ENCODE measurements at regions of chr5 and their contacts with region 1.

Region 1: DNA sequence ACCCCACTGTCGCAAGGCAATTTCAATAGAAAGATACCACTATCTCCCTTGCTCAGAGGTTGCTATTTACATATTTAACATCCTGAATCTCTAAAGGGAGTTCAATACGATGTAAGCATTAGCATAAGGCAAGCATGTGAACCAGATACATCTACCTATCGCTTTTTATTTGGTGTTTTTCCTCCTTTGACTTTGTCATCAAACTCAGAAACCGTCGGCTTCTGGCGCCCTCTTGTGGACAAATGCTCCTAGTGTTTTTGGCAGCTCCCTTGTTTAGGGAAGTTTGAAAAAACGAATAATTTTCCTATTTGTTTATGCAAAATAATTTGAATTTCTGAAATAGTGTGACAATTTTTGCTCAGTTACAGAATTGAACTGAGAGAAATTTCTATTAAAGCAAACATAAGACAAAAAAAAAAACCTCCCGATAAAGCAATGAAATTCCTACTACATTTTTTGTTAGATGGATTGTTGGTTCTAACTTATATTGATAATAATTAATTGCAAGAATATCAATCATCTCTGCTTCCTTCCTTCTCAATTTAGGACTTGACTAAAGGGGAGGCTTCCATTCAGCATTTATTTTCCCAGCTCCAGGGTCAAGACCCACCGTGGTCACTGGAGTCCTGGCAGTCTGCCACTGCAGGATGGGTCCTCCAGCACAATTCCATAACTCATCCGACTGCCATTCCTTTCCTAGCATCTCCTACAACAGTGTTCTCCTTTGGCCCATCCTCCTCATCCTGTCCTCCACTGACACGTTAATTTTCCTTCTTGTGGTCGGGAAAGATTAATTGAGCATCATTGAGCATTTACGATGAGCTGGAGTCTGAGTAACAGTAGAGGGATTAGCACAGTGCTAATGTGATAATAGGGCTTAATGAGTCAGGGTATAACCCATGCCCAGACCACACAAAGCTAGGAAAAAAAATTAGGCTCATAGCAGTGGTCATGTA is 131.8 kb upstream of the CHD1 start:
- DNase-seq: peak; percentile 83
- H3K4me3 Mint-ChIP-seq: no peak overlapping the region
- H3K27ac Mint-ChIP-seq: no peak overlapping the region
- H3K4me1 Mint-ChIP-seq: peaks cover 20% of the 10 kb centered on the region
- H3K27me3 Mint-ChIP-seq: no peaks in the 10 kb centered on the region
- CTCF ChIP-seq: peak; percentile 83

Region 2: DNA sequence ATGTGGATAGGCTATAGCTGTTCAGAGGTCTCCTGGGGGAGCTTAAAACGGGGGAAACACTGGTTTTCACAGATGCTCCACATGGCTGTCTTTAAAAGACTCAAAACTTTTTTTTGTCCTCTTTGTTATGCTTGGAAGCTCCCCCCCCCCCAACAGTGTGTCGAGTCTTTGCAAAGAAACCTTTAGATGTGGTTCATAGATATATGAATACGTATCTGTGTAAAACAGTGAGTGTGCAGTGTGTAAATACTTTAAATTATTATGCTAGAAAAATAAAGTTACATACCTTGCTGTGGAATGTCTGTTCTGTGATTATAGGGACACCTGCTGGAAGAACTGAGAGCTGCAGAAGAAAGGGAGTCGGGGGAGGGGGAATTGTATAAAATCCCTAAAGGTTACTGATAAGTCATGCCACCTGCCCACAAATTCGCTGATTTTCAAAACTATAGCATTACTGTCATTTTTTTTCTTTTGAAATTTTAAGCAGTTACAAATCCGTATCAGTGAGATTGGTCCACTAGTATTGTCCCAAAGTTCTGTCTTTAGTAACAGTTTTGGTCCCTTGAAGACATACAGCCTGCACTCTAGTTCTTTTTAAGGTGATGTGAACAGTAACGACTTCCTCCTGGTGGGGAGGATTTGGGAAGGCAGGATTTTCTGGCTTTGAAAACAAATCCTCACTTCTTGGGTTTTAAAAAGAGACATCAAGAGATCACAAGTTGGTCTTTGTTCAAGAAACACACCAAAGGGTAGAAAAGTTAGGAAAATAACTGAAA is 264.2 kb before region 1 on chr5:
- CTCF ChIA-PET with region 1: no interaction called
- POLR2A ChIA-PET with region 1: no interaction called
- intact Hi-C with region 1: loop called (anchors 10 kb)
- DNase-seq: peak; percentile 74
- H3K4me3 Mint-ChIP-seq: no peak overlapping the region
- H3K27ac Mint-ChIP-seq: no peak overlapping the region
- H3K4me1 Mint-ChIP-seq: no peaks in the 10 kb centered on the region
- H3K27me3 Mint-ChIP-seq: no peaks in the 10 kb centered on the region
- CTCF ChIP-seq: peak; percentile 73

Region 3: DNA sequence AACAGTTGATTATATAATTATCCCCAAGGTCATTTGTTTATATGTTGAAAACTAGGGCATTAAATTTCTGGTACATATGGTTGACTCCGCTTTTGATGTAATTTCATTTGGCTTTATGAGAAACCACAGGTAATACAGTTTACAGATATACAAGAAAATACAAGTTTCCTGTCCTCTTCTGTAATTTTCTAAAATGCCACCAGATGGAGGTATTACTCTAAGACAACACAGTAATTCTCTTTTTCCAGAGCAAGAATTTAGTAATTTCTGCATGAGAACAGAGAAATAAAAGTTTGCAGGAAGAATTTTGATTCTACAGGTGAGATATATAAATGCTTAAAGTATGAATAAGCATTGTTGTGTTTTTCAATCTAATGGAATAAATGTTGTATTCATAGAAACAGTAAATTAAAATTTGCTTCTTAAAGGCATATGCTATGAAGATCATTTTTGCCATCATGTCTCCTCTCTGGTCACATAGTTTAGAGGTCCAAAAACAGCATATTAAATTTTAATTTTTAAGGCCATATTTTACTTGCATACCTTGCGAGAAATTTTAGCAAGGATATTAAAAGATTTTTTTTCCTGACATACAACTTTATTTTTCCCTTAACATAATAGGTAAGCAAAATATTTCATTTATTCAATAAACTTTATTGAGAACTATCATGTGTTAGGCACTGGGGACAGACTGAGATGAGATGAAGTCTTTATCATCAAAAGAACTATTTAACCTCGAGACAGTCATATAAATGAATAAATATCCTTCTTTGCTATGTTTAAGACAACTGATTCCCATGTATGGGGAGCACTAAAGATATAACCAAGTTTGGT is 154.5 kb before region 1 on chr5:
- CTCF ChIA-PET with region 1: interaction called, 30 read pairs
- POLR2A ChIA-PET with region 1: interaction called, 3 read pairs
- intact Hi-C with region 1: loop called (anchors 1 kb)
- DNase-seq: peak; percentile 60
- H3K4me3 Mint-ChIP-seq: no peak overlapping the region
- H3K27ac Mint-ChIP-seq: peak overlapping the region; percentile 31
- H3K4me1 Mint-ChIP-seq: peaks cover 22% of the 10 kb centered on the region
- H3K27me3 Mint-ChIP-seq: no peaks in the 10 kb centered on the region
- CTCF ChIP-seq: peak; percentile 78

Region 4: GRCh38 chr5:99045871-99046270 is 14.7 kb before region 1 on chr5:
- CTCF ChIA-PET with region 1: interaction called, 12 read pairs
- POLR2A ChIA-PET with region 1: interaction called, 4 read pairs
- intact Hi-C with region 1: no loop called
- DNase-seq: no peak
- H3K4me3 Mint-ChIP-seq: no peak overlapping the region
- H3K27ac Mint-ChIP-seq: no peak overlapping the region
- H3K4me1 Mint-ChIP-seq: no peaks in the 10 kb centered on the region
- H3K27me3 Mint-ChIP-seq: no peaks in the 10 kb centered on the region
- CTCF ChIP-seq: no peak

Region 5: DNA sequence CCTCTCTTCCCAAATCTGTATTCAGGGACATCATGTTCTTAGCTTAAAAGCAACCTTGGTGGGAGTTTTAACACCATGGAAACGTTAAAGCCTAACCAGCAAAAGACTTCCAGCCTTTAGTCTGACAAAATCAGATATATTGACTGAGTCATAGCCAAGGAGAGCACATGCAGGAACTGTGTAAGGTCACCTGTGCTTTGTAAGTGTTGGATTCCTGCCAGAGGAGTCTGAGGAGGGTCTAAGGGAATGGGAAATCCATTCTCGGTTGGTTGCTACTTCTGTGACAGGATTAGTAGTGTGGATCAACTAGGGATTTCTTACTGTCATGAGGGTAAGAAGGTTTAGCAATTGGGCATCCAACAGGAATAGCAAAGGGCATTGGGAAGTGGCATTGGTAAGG is 10.2 kb after region 1 on chr5:
- CTCF ChIA-PET with region 1: interaction called, 10 read pairs
- POLR2A ChIA-PET with region 1: no interaction called
- intact Hi-C with region 1: no loop called
- DNase-seq: no peak
- H3K4me3 Mint-ChIP-seq: no peak overlapping the region
- H3K27ac Mint-ChIP-seq: no peak overlapping the region
- H3K4me1 Mint-ChIP-seq: peaks cover 7% of the 10 kb centered on the region
- H3K27me3 Mint-ChIP-seq: no peaks in the 10 kb centered on the region
- CTCF ChIP-seq: no peak

Region 6: GRCh38 chr5:99104538-99105132 is 44.1 kb after region 1 on chr5:
- CTCF ChIA-PET with region 1: no interaction called
- POLR2A ChIA-PET with region 1: no interaction called
- intact Hi-C with region 1: no loop called
- DNase-seq: peak; percentile 45
- H3K4me3 Mint-ChIP-seq: no peak overlapping the region
- H3K27ac Mint-ChIP-seq: no peak overlapping the region
- H3K4me1 Mint-ChIP-seq: no peaks in the 10 kb centered on the region
- H3K27me3 Mint-ChIP-seq: peaks cover 72% of the 10 kb centered on the region
- CTCF ChIP-seq: peak; percentile 47

Measured in MCF 10A (cell line).